ENCODE measurements at regions of chr19 and their contacts with region 1.

Region 1: DNA sequence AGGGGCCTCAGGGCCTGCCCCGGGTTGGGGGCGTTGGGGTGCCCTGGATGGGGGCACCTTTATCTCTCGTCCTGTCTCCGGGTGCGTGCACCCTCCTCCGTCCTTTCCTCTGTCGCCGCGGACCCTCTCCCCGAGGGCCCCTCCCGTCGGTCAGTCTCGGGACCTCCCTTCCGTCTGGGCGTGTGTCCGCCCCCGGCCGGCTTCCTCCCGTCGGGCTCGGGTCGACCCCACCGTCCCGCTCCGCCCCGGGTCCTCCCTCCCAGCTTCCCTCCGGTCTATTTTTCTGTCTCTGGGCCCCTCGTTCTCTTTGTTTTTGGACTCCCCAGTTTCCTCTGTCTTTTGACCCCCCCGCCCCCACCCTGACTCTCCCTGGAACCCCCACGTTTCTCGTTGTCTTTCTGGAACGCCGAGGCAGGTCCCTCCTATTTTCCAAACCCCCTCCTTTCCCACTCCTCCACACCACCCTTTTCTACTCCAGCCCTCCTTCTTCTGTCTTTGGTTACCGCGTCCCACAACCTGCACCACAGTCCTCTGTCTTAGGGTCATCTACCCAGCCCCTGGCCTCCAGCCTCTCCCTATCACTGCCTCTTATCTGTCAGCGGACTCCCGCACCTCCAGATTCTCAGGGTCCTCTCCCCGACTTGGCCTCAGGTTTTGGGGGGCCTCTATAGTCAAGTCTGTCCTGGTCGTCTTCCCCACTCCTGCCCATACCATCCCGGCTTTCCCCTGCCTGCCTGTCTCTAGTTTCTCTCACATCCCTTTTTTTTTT is 751 bp downstream of the EGLN2 start:
- DNase-seq: peak in 2 of 10 donors; percentile 78 to 89

Region 2: GRCh38 chr19:40750059-40750873 is 49.5 kb before region 1 on chr19 and contains the start of gene ACTMAP:
- intact Hi-C with region 1: loop called (anchors 1 kb)
- DNase-seq: peak; percentile 100

Region 3: DNA sequence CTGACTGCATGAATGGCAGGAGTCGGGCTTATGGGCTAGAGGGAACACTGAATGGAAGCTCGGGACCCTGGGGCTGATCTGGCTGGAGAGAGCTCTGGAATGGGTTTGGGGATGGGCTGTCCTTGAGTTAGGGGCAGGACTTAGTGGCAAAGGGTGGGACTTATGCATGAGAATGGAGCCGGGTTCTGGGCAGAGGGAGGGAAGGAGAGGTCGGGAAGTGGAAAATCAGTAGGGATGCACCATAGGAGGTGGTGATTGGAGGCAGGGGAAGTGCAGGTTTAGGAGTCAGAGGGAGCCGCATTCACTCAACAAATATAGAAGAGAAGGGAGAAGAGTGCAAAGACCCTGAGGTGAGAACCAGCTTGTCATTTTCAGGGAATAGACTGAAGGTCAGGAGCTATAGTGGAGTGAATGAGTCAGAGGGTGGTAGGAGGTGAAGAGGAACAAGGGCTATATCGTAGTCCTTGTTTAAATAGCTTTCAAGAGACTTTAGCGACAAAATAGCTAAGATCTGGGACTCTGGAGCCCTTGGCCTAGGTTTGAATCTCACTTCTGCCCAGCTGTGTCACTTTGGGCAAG is 20.9 kb before region 1 on chr19:
- intact Hi-C with region 1: loop called (anchors 1 kb)
- DNase-seq: no peak